Colonic mucosa (tissue), 4 donors: ENCODE measurements at regions of chr7 and their contacts with region 1.

Region 1: DNA sequence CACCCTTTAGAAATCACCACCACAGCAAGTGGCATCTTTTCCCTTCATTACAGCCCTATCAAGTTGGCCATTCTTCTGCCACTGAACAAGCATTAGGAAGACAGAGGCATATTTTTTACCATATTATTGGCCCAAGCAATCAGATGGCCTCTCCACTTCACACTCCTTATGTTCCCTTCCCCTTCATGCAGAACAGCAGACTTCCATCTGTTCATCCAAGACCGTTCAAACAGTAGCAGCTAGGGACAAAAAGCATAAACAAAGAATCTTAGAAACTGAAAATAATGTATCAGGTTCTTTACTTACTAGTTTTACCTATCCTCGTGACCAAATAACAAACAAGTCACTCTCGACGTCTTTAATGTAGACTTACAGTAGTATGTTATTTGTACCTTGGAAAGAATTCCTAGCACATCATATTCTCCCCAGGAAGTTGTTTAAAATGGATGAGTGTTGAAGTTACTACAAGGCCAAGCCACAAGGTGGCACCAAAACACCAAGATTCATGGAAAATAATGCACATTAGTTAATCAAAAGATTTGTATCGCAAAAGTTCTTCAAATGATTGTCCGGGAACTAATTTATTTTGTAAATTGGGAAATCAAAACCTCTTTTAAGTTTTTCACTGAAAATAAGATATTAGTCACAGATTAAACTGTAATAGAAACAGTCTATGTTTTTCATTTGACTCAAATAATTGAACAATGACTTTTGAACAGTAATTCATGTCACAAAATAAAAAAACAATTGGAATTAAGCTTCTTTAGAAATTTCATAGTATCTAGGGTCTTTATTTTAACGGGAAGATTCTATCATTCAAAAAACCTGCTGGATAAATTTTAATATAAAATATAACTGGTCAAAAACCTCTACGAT is 112.1 kb downstream of the VPS41 start:
- DNase-seq: peak; percentile 52
- H3K4me3 ChIP-seq: no peak overlapping the region
- H3K27ac ChIP-seq: no peak overlapping the region
- H3K4me1 ChIP-seq: no peaks in the 10 kb centered on the region
- H3K27me3 ChIP-seq: no peaks in the 10 kb centered on the region
- CTCF ChIP-seq: peak; percentile 73

Region 2: GRCh38 chr7:38840736-38841460 is 44.0 kb after region 1 on chr7:
- intact Hi-C with region 1: no loop called
- DNase-seq: no peak
- H3K4me3 ChIP-seq: no peak overlapping the region
- H3K27ac ChIP-seq: no peak overlapping the region
- H3K4me1 ChIP-seq: no peaks in the 10 kb centered on the region
- H3K27me3 ChIP-seq: no peaks in the 10 kb centered on the region
- CTCF ChIP-seq: no peak

Region 3: GRCh38 chr7:38908759-38909335 is 112.0 kb after region 1 on chr7 and contains the start of gene VPS41:
- intact Hi-C with region 1: loop called (anchors 10 kb)
- DNase-seq: peak; percentile 92
- H3K4me3 ChIP-seq: peak within 1 kb of the TSS; percentile 80
- H3K27ac ChIP-seq: no peak within 1 kb of the TSS
- H3K4me1 ChIP-seq: no peaks in the 10 kb centered on the region
- H3K27me3 ChIP-seq: no peaks in the 10 kb centered on the region
- CTCF ChIP-seq: no peak
- total RNA-seq, gene VPS41: 56.5 to 60.9 TPM

Region 4: DNA sequence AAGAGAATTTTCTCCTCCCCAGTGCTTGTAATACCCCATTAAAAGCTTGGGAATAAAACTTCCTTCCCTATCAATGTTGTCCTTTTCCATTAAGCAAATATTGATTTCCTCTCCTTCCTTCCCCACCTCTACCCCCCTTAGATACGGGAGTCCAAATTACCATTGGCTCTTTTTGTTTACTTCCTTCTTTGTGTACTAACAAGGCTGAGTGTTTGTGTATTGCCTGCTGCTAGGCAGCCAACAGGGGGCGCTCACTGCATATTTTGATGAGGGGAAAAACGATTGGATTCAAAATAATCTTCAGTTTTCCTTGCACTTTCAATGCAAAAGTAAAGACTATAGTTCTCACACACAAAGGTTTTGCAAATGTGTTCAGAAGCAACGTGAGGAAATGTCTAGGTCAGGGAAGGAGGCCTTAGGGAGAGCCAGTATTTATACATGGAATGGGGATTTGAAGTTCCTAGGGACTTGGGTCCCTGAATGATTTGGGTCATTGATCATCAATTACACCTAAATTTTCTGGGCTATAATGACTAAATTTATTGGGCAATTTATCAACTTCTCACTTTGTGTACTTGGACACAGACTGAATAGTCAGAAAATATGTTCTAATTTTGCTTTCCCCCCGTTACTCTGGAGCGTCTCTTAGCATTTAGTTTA is 135.8 kb after region 1 on chr7:
- intact Hi-C with region 1: loop called (anchors 5 kb)
- DNase-seq: peak; percentile 64
- H3K4me3 ChIP-seq: no peak overlapping the region
- H3K27ac ChIP-seq: no peak overlapping the region
- H3K4me1 ChIP-seq: no peaks in the 10 kb centered on the region
- H3K27me3 ChIP-seq: no peaks in the 10 kb centered on the region
- CTCF ChIP-seq: peak; percentile 81

Region 5: GRCh38 chr7:39517240-39517639 is 720.4 kb after region 1 on chr7:
- intact Hi-C with region 1: loop called (anchors 2 kb)
- DNase-seq: no peak
- H3K4me3 ChIP-seq: no peak overlapping the region
- H3K27ac ChIP-seq: no peak overlapping the region
- H3K4me1 ChIP-seq: no peaks in the 10 kb centered on the region
- H3K27me3 ChIP-seq: no peaks in the 10 kb centered on the region
- CTCF ChIP-seq: no peak